Panc1 (cell line): ENCODE measurements at regions of chr13 and their contacts with region 1.

Region 1: GRCh38 chr13:67224148-67224846 is 5.8 kb downstream of the PCDH9 start:
- DNase-seq: no peak
- ATAC-seq: peak; percentile 66; the same call in 1 of the 2 replicates
- H3K4me3 ChIP-seq: peak overlapping the region in 1 of 2 experiments; percentile 32; a peak in 2 of 4 replicates
- H3K27ac ChIP-seq: peak overlapping the region; percentile 29; the same call in 1 of the 2 replicates
- H3K4me1 ChIP-seq: peaks cover 4% of the 10 kb centered on the region; the same call in 1 of the 2 replicates
- H3K27me3 ChIP-seq: no peaks in the 10 kb centered on the region
- CTCF ChIP-seq: peak; percentile 77

Region 2: DNA sequence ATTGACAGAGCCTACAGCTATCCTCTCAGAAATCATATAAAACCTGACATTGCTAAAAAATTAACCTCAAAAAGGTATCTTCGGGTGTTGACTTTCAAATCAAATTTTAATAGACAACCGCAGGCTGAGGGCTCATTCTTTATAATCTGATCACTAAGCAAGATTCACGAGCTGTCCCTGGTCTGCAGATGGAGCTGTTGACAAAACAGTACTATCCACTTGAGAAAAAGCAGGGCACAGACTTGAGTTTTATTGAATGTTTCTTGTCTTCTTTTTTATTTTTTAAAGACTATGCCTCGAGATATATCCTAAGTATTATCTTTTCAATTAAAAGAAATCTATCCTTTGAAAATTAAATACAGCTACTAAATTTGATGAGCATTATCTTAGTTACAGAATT is 534.7 kb before region 1 on chr13:
- CTCF ChIA-PET with region 1: no interaction called
- POLR2A ChIA-PET with region 1: no interaction called
- in situ Hi-C with region 1: no loop called
- intact Hi-C with region 1: loop called (anchors 10 kb)
- DNase-seq: no peak
- ATAC-seq: no peak
- H3K4me3 ChIP-seq: no peak overlapping the region
- H3K27ac ChIP-seq: no peak overlapping the region
- H3K4me1 ChIP-seq: no peaks in the 10 kb centered on the region
- H3K27me3 ChIP-seq: no peaks in the 10 kb centered on the region
- CTCF ChIP-seq: peak; percentile 43; the same call in 1 of the 2 replicates

Region 3: GRCh38 chr13:66887088-66887487 is 337.2 kb before region 1 on chr13:
- CTCF ChIA-PET with region 1: no interaction called
- POLR2A ChIA-PET with region 1: no interaction called
- in situ Hi-C with region 1: no loop called
- intact Hi-C with region 1: no loop called
- DNase-seq: no peak
- ATAC-seq: no peak
- H3K4me3 ChIP-seq: no peak overlapping the region
- H3K27ac ChIP-seq: no peak overlapping the region
- H3K4me1 ChIP-seq: no peaks in the 10 kb centered on the region
- H3K27me3 ChIP-seq: no peaks in the 10 kb centered on the region
- CTCF ChIP-seq: no peak

Region 4: DNA sequence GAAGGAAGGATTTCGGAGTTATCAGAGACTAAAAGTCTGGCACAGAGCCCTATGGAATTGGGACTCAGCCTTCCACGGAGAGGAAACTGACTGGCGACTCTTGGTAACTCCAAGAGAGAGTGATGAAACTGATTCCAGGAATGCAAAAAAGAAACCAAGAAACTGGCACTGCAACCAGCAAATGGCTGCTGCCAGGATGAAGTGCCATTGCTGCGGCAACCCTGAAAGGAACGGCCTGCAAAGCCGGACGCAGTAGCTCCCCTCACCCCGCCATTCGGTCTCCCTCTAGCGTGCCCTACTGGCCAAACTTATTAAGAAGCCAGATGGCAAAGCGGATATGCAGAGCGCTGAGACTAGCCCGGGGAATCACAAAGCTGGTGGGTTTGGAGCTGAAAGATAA is 230.2 kb before region 1 on chr13:
- CTCF ChIA-PET with region 1: no interaction called
- POLR2A ChIA-PET with region 1: no interaction called
- in situ Hi-C with region 1: no loop called
- intact Hi-C with region 1: loop called (anchors 10 kb)
- DNase-seq: no peak
- ATAC-seq: peak; percentile 98
- H3K4me3 ChIP-seq: peak overlapping the region; percentile 38 to 74
- H3K27ac ChIP-seq: peak overlapping the region; percentile 59
- H3K4me1 ChIP-seq: peaks cover 5% of the 10 kb centered on the region; the same call in 1 of the 2 replicates
- H3K27me3 ChIP-seq: no peaks in the 10 kb centered on the region
- CTCF ChIP-seq: peak; percentile 86

Region 5: GRCh38 chr13:67278235-67278634 is 53.9 kb after region 1 on chr13:
- CTCF ChIA-PET with region 1: no interaction called
- POLR2A ChIA-PET with region 1: no interaction called
- in situ Hi-C with region 1: no loop called
- intact Hi-C with region 1: no loop called
- DNase-seq: no peak
- ATAC-seq: no peak
- H3K4me3 ChIP-seq: no peak overlapping the region
- H3K27ac ChIP-seq: no peak overlapping the region
- H3K4me1 ChIP-seq: no peaks in the 10 kb centered on the region
- H3K27me3 ChIP-seq: no peaks in the 10 kb centered on the region
- CTCF ChIP-seq: no peak

Region 6: GRCh38 chr13:67520886-67521285 is 296.6 kb after region 1 on chr13:
- CTCF ChIA-PET with region 1: no interaction called
- POLR2A ChIA-PET with region 1: no interaction called
- in situ Hi-C with region 1: no loop called
- intact Hi-C with region 1: no loop called
- DNase-seq: no peak
- ATAC-seq: no peak
- H3K4me3 ChIP-seq: no peak overlapping the region
- H3K27ac ChIP-seq: no peak overlapping the region
- H3K4me1 ChIP-seq: no peaks in the 10 kb centered on the region
- H3K27me3 ChIP-seq: no peaks in the 10 kb centered on the region
- CTCF ChIP-seq: no peak